Body of pancreas (tissue), 4 donors: ENCODE measurements at regions of chr4 and their contacts with region 1.

Region 1: GRCh38 chr4:94595879-94596483 is 144.2 kb downstream of the PDLIM5 start:
- DNase-seq: no peak
- ATAC-seq: peak; percentile 70
- H3K4me3 ChIP-seq: no peak overlapping the region
- H3K27ac ChIP-seq: no peak overlapping the region
- H3K4me1 ChIP-seq: peaks cover 11% of the 10 kb centered on the region
- H3K27me3 ChIP-seq: no peaks in the 10 kb centered on the region
- CTCF ChIP-seq: peak; percentile 15 to 85 (median 75)
- POLR2A ChIP-seq: no peak

Region 2: GRCh38 chr4:94304365-94304971 is 291.5 kb before region 1 on chr4:
- intact Hi-C with region 1: loop called (anchors 10 kb)
- DNase-seq: peak in 1 of 4 donors; percentile 20
- ATAC-seq: no peak
- H3K4me3 ChIP-seq: no peak overlapping the region
- H3K27ac ChIP-seq: no peak overlapping the region
- H3K4me1 ChIP-seq: no peaks in the 10 kb centered on the region
- H3K27me3 ChIP-seq: no peaks in the 10 kb centered on the region
- CTCF ChIP-seq: peak in 6 of 7 experiments; percentile 49 to 61 (median 55)
- POLR2A ChIP-seq: no peak

Region 3: DNA sequence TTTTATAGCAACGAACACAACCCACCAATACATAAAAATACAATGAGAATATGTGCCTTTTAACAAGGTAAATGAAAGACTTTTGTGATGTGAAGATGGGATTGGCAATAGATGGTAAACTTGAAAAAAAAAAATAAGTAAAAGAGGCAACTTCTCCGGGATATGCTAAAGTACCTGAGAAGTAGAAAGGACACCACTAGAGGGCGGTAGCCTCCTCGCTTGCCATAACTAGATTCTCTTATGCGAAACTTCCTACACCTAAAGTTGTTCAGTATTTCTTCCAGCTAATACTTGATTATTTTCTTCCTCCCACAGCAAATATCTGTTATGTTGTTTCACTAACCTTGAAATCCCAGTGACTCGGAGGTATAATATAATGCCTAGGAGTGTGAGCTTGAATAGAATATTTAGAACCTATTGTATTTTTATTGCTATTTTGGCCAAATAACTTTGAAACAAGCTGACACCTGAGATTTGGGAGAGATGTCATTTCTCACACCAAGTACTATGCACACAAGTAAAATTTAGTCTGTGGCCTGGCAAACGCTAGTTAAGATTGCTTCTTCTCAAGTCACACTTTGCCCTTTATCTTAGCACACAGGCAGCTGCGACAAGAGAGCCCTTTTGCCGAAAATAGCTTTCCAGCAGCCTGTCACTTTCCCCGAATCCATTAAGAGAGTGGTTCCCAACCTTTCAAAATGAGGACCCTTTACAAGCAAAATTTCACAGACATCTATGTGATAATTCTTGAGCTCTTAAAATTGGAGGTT is 189.1 kb before region 1 on chr4:
- intact Hi-C with region 1: loop called (anchors 5 kb)
- DNase-seq: peak; percentile 80 to 90 (median 85)
- ATAC-seq: peak; percentile 86
- H3K4me3 ChIP-seq: no peak overlapping the region
- H3K27ac ChIP-seq: no peak overlapping the region
- H3K4me1 ChIP-seq: peaks cover 6% of the 10 kb centered on the region
- H3K27me3 ChIP-seq: no peaks in the 10 kb centered on the region
- CTCF ChIP-seq: peak; percentile 69 to 88 (median 85)
- POLR2A ChIP-seq: no peak

Region 4: DNA sequence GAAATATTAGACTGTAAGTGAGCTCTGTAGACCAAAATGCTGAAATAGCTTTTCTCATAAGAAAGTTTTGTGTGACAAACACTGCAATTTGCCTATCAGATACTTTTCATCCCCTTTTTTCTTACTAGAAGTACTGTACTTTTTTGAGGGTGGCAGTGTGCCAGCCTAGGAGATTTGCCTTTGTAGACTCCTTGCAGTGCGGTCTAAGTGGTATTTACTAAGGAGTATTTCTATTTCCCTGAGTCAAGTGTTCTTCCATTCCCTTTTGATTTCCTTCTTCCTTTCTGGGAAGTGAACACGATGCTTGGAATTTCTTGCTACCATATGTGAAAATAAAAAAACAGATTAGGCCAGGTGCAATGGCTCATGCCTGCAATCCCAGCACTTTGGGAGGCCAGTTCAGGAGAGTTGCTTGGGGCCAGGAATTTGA is 109.6 kb before region 1 on chr4:
- intact Hi-C with region 1: no loop called
- DNase-seq: peak in 1 of 4 donors; percentile 52
- ATAC-seq: no peak
- H3K4me3 ChIP-seq: no peak overlapping the region
- H3K27ac ChIP-seq: no peak overlapping the region
- H3K4me1 ChIP-seq: peaks cover 14% of the 10 kb centered on the region
- H3K27me3 ChIP-seq: no peaks in the 10 kb centered on the region
- CTCF ChIP-seq: no peak
- POLR2A ChIP-seq: no peak

Region 5: GRCh38 chr4:94889946-94890345 is 294.0 kb after region 1 on chr4:
- intact Hi-C with region 1: no loop called
- DNase-seq: no peak
- ATAC-seq: no peak
- H3K4me3 ChIP-seq: no peak overlapping the region
- H3K27ac ChIP-seq: no peak overlapping the region
- H3K4me1 ChIP-seq: no peaks in the 10 kb centered on the region
- H3K27me3 ChIP-seq: no peaks in the 10 kb centered on the region
- CTCF ChIP-seq: no peak
- POLR2A ChIP-seq: no peak